K562 (cell line): ENCODE measurements at regions of chr11 and their contacts with region 1.

Region 1: GRCh38 chr11:33646629-33647028 is 54.0 kb downstream of the C11orf91 start:
- DNase-seq: no peak
- ATAC-seq: no peak
- H3K4me3 ChIP-seq: no peak overlapping the region
- H3K27ac ChIP-seq: no peak overlapping the region
- H3K4me1 ChIP-seq: 0 out of 5 replicates have a peak, but pooled peaks cover 0 to 4% of the 10 kb centered on the region in 2 experiments
- H3K27me3 ChIP-seq: peaks cover 15 to 36% of the 10 kb centered on the region in 2 experiments
- CTCF ChIP-seq: no peak
- EP300 ChIP-seq: no peak
- POLR2A ChIP-seq: no peak
- RAD21 ChIP-seq: no peak

Region 2: GRCh38 chr11:33615751-33616150 is 30.9 kb before region 1 on chr11:
- CTCF ChIA-PET with region 1: no interaction called
- POLR2A ChIA-PET with region 1: no interaction called
- in situ Hi-C with region 1: no loop called
- intact Hi-C with region 1: loop called (anchors 1 kb)
- DNase-seq: no peak
- ATAC-seq: no peak
- H3K4me3 ChIP-seq: no peak overlapping the region
- H3K27ac ChIP-seq: no peak overlapping the region
- H3K4me1 ChIP-seq: no peaks in the 10 kb centered on the region
- H3K27me3 ChIP-seq: peaks cover 8 to 11% of the 10 kb centered on the region in 2 experiments; a peak in 4 of 5 replicates
- CTCF ChIP-seq: no peak
- EP300 ChIP-seq: no peak
- POLR2A ChIP-seq: no peak
- RAD21 ChIP-seq: no peak

Region 3: GRCh38 chr11:33722579-33723225 is 76.1 kb after region 1 on chr11:
- CTCF ChIA-PET with region 1: no interaction called
- POLR2A ChIA-PET with region 1: no interaction called
- in situ Hi-C with region 1: no loop called
- intact Hi-C with region 1: no loop called
- DNase-seq: peak; percentile 40 to 73 (median 53)
- ATAC-seq: peak; percentile 71
- H3K4me3 ChIP-seq: no peak overlapping the region
- H3K27ac ChIP-seq: peak overlapping the region; percentile 64
- H3K4me1 ChIP-seq: peaks cover 24 to 36% of the 10 kb centered on the region in 2 experiments
- H3K27me3 ChIP-seq: no peaks in the 10 kb centered on the region
- CTCF ChIP-seq: no peak
- EP300 ChIP-seq: no peak
- POLR2A ChIP-seq: no peak
- RAD21 ChIP-seq: no peak

Region 4: DNA sequence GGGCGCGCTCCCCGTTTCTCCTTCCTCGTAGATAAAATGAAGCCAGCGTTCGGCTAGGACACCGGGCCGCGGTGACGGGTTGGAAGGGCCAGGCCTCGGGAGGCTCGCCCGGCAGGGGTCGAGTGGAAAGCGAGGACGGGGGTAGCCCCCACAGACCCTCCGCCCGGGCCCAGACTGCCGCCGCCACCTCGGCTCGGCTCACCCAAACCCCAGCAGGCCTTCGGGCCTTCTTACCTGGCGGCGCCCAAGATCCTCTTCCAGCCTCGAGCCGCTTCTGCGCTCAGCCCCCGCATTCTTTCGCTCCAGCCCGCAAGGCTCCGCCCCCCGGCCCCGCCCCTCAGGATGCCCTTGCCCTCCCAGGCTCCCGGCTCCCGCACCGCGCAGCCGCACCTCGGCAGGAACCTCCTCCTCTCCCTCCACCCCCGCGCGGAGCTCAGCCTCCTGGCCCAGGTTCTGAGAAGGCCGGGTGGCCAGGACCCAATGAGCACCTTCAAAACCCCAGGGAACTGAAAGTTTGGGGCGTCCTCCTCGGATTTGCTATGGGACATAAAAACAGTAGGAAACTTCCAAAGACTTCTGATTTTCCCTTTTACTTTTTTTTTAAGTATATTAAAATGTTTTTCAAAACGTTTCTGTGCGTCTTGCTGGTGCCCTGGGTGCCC is 89.7 kb after region 1 on chr11 and contains the start of gene CD59:
- CTCF ChIA-PET with region 1: no interaction called
- POLR2A ChIA-PET with region 1: no interaction called
- in situ Hi-C with region 1: no loop called
- intact Hi-C with region 1: no loop called
- DNase-seq: peak; percentile 96 to 98 (median 96)
- ATAC-seq: peak; percentile 87
- H3K4me3 ChIP-seq: peak within 1 kb of the TSS; percentile 79
- H3K27ac ChIP-seq: peak within 1 kb of the TSS; percentile 90
- H3K4me1 ChIP-seq: peaks cover 16 to 53% of the 10 kb centered on the region in 2 experiments; a peak in 4 of 5 replicates
- H3K27me3 ChIP-seq: no peaks in the 10 kb centered on the region
- CTCF ChIP-seq: no peak
- EP300 ChIP-seq: no peak
- POLR2A ChIP-seq: peak; percentile 87
- RAD21 ChIP-seq: no peak
- polyA plus RNA-seq, gene CD59: 283 to 287 TPM